Left cardiac atrium (tissue), 4 donors: ENCODE measurements at regions of chr7 and their contacts with region 1.

Region 1: DNA sequence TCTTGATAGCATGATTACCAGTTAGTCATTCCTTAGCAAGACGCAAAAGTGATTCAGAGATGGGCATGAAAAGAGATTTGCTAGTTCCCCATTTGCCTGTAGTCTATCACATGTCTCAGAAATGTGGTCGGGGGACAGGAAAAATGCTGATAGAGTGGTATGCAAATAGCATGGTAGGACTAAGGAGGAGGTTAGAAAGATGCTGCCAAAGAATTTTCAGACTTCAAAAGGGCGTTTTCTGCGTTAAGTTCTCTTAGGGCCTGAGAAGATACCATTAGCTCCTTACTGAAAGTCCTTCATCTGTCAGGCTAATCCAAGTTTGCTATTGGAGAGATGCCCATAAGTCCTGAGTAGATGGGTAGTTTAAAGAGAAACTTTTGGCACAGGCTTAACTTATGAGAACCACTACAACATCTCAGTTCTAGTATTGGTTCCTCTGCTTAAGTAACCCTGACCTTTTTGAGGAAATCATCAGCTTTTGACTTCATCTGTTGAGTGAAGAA is 2.7 kb downstream of the CALD1 start:
- DNase-seq: no peak
- ATAC-seq: no peak

Region 2: DNA sequence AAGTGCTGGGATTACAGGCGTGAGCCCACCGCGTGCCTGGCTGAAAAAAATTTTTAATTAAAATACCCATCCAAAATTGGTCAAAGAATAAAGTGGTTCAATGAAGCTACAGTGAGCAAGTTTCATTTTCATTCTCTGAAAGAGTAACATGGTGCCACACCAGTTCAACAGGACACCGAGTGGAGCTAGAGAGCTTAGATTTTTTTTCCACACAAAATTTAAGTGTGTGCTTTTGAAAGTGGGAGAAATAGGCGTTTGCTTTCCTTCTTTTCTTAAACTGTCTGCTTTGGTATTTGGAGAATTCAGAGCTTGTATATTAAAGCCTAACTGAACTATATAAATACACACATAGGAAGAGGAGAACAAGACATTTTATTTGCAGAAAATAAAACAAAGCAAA is 92.2 kb before region 1 on chr7:
- intact Hi-C with region 1: no loop called
- DNase-seq: no peak
- ATAC-seq: peak; percentile 81 to 82

Region 3: GRCh38 chr7:134935701-134936100 is 153.5 kb after region 1 on chr7:
- intact Hi-C with region 1: loop called in 1 of 2 experiments (anchors 5 kb)
- DNase-seq: no peak
- ATAC-seq: peak in 1 of 2 donors; percentile 58